Aorta (tissue), 5 donors: ENCODE measurements at regions of chr21 and their contacts with region 1.

Region 1: GRCh38 chr21:36504067-36505058 is 24.4 kb upstream of the CLDN14 start:
- DNase-seq: no peak
- ATAC-seq: peak; percentile 69
- H3K4me3 ChIP-seq: no peak overlapping the region
- H3K27ac ChIP-seq: no peak overlapping the region
- H3K4me1 ChIP-seq: no peaks in the 10 kb centered on the region
- H3K27me3 ChIP-seq: no peaks in the 10 kb centered on the region

Region 2: GRCh38 chr21:35861661-35862060 is 642.7 kb before region 1 on chr21:
- intact Hi-C with region 1: no loop called
- DNase-seq: no peak
- ATAC-seq: no peak
- H3K4me3 ChIP-seq: no peak overlapping the region
- H3K27ac ChIP-seq: no peak overlapping the region
- H3K4me1 ChIP-seq: no peaks in the 10 kb centered on the region
- H3K27me3 ChIP-seq: no peaks in the 10 kb centered on the region

Region 3: GRCh38 chr21:36419996-36420395 is 84.4 kb before region 1 on chr21:
- intact Hi-C with region 1: loop called in 1 of 2 experiments (anchors 5 kb)
- DNase-seq: peak; percentile 91
- ATAC-seq: peak; percentile 83
- H3K4me3 ChIP-seq: no peak overlapping the region
- H3K27ac ChIP-seq: no peak overlapping the region
- H3K4me1 ChIP-seq: no peaks in the 10 kb centered on the region
- H3K27me3 ChIP-seq: no peaks in the 10 kb centered on the region

Region 4: DNA sequence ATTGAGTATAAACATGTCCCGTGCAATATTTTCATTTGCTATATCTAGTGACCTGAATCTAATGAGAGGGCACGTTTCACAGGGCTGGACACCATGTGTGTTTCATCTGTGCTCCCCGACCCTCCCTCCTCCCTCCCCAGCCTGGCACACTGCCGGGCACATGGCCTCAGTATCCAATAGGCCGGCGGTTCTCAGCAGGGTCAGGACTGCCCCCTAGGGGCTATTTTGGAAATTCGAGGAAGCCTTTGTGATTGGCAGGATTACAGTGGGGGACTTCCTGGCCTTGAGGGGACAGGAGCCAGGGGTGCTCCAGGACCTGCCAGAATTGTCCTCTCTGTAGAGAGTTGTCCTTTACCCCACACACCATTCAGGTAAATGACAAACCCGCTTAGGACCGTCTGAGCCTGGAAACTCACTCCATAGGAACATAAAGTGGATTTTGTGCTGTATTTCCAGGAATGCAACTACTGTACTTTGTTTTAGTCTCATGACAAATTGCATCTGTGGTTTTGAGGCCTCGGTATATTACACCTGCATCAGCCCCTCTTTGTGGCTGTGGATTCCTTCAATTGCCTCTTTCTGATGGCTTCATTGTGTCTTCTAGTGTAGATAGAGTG is 85.1 kb after region 1 on chr21:
- intact Hi-C with region 1: loop called in 1 of 2 experiments (anchors 5 kb)
- DNase-seq: peak; percentile 55 to 84
- ATAC-seq: no peak
- H3K4me3 ChIP-seq: no peak overlapping the region
- H3K27ac ChIP-seq: no peak overlapping the region
- H3K4me1 ChIP-seq: no peaks in the 10 kb centered on the region
- H3K27me3 ChIP-seq: no peaks in the 10 kb centered on the region